OCI-LY7 (cell line): ENCODE measurements at regions of chr5 and their contacts with region 1.

Region 1: GRCh38 chr5:150458819-150459557 is 9.4 kb upstream of the RPS14 start:
- DNase-seq: peak; percentile 84
- H3K4me3 ChIP-seq: no peak overlapping the region
- H3K27ac ChIP-seq: peak overlapping the region; percentile 87
- H3K4me1 ChIP-seq: peaks cover 71% of the 10 kb centered on the region
- CTCF ChIP-seq: peak; percentile 74

Region 2: GRCh38 chr5:150523472-150524350 is 64.7 kb after region 1 on chr5:
- CTCF ChIA-PET with region 1: interaction called, 6 read pairs
- POLR2A ChIA-PET with region 1: interaction called, 7 read pairs
- intact Hi-C with region 1: loop called (anchors 1 kb)
- DNase-seq: peak; percentile 73
- H3K4me3 ChIP-seq: no peak overlapping the region
- H3K27ac ChIP-seq: no peak overlapping the region
- H3K4me1 ChIP-seq: peaks cover 39% of the 10 kb centered on the region
- CTCF ChIP-seq: peak; percentile 80

Region 3: GRCh38 chr5:150544611-150545219 is 85.7 kb after region 1 on chr5:
- CTCF ChIA-PET with region 1: interaction called, 7 read pairs
- POLR2A ChIA-PET with region 1: interaction called, 5 read pairs
- intact Hi-C with region 1: loop called (anchors 1 kb)
- DNase-seq: peak; percentile 86
- H3K4me3 ChIP-seq: no peak overlapping the region
- H3K27ac ChIP-seq: no peak overlapping the region
- H3K4me1 ChIP-seq: peaks cover 5% of the 10 kb centered on the region
- CTCF ChIP-seq: peak; percentile 97

Region 4: GRCh38 chr5:150560401-150561193 is 101.6 kb after region 1 on chr5:
- CTCF ChIA-PET with region 1: interaction called, 10 read pairs
- POLR2A ChIA-PET with region 1: interaction called, 4 read pairs
- intact Hi-C with region 1: loop called (anchors 1 kb)
- DNase-seq: peak; percentile 87
- H3K4me3 ChIP-seq: no peak overlapping the region
- H3K27ac ChIP-seq: no peak overlapping the region
- H3K4me1 ChIP-seq: peaks cover 26% of the 10 kb centered on the region
- CTCF ChIP-seq: peak; percentile 95

Region 5: DNA sequence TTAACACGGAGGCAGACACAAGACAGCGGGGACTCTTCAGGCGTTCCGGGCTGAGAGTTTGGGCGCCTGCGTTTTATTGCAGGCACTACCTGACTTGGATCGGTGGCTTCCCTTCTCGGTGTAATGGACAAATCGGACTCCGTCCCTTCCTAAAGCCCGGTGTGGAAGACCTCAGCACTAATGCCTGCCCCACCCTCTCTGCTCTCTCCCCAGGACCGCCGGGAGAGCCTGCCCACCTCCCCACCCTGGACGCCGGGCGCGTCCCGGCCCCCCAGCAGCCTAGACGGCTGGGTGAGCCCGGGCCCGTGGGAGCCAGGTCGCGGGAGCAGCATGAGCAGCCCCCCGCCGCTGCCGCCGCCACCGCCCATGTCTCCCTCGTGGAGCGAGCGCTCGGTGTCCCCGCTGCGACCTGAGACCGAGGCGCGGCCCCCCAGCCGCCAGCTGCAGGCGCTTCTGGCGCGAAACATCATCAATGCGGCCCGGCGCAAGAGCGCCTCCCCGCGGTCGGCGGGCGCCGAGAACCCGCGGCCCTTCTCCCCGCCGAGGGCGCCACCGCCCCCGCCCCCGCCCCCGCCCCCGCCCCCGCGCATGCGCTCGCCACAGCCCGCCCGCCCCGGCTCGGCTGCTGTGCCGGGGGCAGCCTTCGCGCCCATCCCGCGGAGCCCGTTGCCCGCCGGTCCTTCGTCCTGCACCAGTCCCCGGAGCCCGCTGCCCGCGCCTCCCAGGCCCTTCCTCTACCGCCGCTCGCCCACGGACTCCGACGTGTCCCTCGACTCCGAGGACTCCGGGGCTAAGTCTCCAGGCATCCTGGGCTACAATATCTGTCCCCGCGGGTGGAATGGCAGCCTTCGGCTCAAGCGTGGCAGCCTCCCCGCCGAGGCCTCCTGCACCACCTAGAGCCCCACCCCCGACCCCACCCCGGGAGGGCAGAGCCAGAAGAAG is 197.5 kb after region 1 on chr5:
- CTCF ChIA-PET with region 1: interaction called, 3 read pairs
- POLR2A ChIA-PET with region 1: no interaction called
- intact Hi-C with region 1: loop called (anchors 1 kb)
- DNase-seq: peak; percentile 84
- H3K4me3 ChIP-seq: peak overlapping the region; percentile 70
- H3K27ac ChIP-seq: no peak overlapping the region
- H3K4me1 ChIP-seq: peaks cover 11% of the 10 kb centered on the region
- CTCF ChIP-seq: peak; percentile 56

Region 6: DNA sequence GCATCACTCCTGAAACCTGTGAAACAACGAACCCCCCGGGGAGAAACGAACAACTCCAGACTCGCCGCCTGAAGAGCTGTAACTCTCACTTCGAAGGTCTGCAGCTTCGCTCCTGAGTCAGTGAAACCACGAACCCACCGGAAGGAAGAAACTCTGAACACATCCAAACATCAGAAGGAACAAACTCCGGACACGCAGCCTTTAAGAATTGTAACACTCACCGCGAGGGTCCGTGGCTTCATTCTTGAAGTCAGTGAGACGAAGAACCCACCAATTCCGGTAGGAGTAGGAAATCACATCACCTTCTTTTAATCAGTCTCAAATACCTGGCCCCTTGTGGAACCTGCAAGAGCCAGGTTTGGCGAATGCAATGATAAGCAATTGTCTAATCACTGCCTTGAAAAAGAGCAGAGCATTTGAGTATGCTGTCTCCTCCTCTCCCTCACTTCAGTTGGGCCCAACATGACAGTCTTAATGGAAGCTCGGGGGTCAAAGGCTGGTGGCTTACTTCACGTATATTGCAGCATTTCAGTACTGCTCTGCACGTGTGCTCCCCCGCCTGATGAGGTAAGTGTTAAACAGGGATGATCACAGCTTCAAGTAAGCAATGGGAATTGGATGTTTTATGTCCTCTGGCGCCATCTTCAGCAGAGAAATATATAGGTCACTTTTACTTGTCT is 387.8 kb after region 1 on chr5:
- CTCF ChIA-PET with region 1: interaction called, 4 read pairs
- POLR2A ChIA-PET with region 1: interaction called, 3 read pairs
- intact Hi-C with region 1: loop called (anchors 2 kb)
- DNase-seq: peak; percentile 77
- H3K4me3 ChIP-seq: no peak overlapping the region
- H3K27ac ChIP-seq: no peak overlapping the region
- H3K4me1 ChIP-seq: peaks cover 5% of the 10 kb centered on the region
- CTCF ChIP-seq: peak; percentile 81